ENCODE measurements at regions of chr16 and their contacts with region 1.

Region 1: GRCh38 chr16:20849587-20850390 is 43.5 kb downstream of the REXO5 start:
- H3K4me3 ChIP-seq: no peak overlapping the region
- H3K27ac ChIP-seq: no peak overlapping the region
- H3K4me1 ChIP-seq: no peaks in the 10 kb centered on the region
- CTCF ChIP-seq: peak; percentile 75

Region 2: GRCh38 chr16:20860361-20860760 is 10.6 kb after region 1 on chr16:
- CTCF ChIA-PET with region 1: interaction called, 10 read pairs
- POLR2A ChIA-PET with region 1: no interaction called
- H3K4me3 ChIP-seq: no peak overlapping the region
- H3K27ac ChIP-seq: no peak overlapping the region
- H3K4me1 ChIP-seq: no peaks in the 10 kb centered on the region
- CTCF ChIP-seq: no peak

Region 3: GRCh38 chr16:21001262-21001661 is 151.5 kb after region 1 on chr16:
- CTCF ChIA-PET with region 1: interaction called, 14 read pairs
- POLR2A ChIA-PET with region 1: no interaction called
- H3K4me3 ChIP-seq: no peak overlapping the region
- H3K27ac ChIP-seq: no peak overlapping the region
- H3K4me1 ChIP-seq: no peaks in the 10 kb centered on the region
- CTCF ChIP-seq: no peak

Region 4: DNA sequence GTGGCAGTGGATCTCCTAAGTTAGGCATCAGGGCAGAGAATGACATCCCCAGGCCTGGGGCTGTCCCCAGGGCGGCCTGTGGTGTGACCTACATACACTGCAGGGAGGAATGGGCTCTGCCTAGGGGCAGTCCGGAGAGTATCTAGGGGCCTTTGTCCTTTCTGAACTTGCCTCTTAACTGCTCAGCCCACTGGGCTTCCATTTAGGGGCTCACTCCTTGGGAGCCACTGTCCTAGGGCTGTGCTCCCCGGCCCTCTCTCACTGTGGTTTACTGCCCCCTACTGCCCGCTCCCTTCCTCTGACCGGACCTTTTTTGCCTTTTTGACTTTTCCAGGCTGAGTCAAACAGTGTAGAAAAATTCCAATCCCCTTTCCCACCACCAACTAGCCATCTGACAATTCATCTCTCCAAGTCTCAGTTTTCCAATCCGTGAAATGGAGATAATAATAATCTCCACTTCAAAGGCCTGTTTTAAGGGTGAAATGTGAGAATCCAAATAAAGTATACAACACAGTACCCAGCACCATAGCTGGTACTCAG is 234.0 kb after region 1 on chr16:
- CTCF ChIA-PET with region 1: interaction called, 44 read pairs
- POLR2A ChIA-PET with region 1: no interaction called
- H3K4me3 ChIP-seq: no peak overlapping the region
- H3K27ac ChIP-seq: no peak overlapping the region
- H3K4me1 ChIP-seq: no peaks in the 10 kb centered on the region
- CTCF ChIP-seq: no peak

Region 5: DNA sequence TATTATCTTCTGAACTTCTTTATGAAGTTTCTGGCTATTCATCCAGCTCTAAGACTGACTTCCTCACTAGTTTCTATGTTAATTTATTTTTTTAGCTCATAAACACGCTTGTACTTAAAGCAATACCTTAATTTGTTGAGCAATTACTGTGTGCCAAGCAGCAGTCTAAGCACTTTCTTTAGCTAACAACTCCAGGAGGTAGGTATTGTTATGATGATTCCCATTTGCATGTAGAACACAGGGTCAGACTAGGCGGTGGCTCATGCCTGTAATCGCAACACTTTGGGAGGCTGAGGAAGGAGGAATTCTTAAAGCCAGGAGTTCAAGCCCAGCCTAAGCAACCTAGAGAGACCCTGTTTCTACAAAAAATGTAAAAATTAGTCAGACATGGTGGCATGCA is 281.0 kb after region 1 on chr16:
- CTCF ChIA-PET with region 1: interaction called, 10 read pairs
- POLR2A ChIA-PET with region 1: no interaction called
- H3K4me3 ChIP-seq: no peak overlapping the region
- H3K27ac ChIP-seq: no peak overlapping the region
- H3K4me1 ChIP-seq: no peaks in the 10 kb centered on the region
- CTCF ChIP-seq: no peak

Measured in HEK293 (cell line).